Keratinocyte (primary cell): ENCODE measurements at regions of chr15 and their contacts with region 1.

Region 1: GRCh38 chr15:45200001-45200798 is 12.4 kb upstream of the SHF start:
- DNase-seq: peak; percentile 93
- H3K4me3 ChIP-seq: peak overlapping the region; percentile 69 to 90 (median 89)
- H3K27ac ChIP-seq: peak overlapping the region; percentile 87
- H3K4me1 ChIP-seq: peaks cover 8% of the 10 kb centered on the region
- H3K27me3 ChIP-seq: no peaks in the 10 kb centered on the region
- CTCF ChIP-seq: no peak

Region 2: GRCh38 chr15:45307230-45307924 is 107.2 kb after region 1 on chr15:
- dilution Hi-C with region 1: loop called (anchors 25 kb)
- DNase-seq: no peak
- H3K4me3 ChIP-seq: peak overlapping the region in 1 of 3 experiments; percentile 31
- H3K27ac ChIP-seq: no peak overlapping the region
- H3K4me1 ChIP-seq: peaks cover 2% of the 10 kb centered on the region
- H3K27me3 ChIP-seq: peaks cover 3% of the 10 kb centered on the region
- CTCF ChIP-seq: peak in 2 of 3 experiments; percentile 37 to 43

Region 3: DNA sequence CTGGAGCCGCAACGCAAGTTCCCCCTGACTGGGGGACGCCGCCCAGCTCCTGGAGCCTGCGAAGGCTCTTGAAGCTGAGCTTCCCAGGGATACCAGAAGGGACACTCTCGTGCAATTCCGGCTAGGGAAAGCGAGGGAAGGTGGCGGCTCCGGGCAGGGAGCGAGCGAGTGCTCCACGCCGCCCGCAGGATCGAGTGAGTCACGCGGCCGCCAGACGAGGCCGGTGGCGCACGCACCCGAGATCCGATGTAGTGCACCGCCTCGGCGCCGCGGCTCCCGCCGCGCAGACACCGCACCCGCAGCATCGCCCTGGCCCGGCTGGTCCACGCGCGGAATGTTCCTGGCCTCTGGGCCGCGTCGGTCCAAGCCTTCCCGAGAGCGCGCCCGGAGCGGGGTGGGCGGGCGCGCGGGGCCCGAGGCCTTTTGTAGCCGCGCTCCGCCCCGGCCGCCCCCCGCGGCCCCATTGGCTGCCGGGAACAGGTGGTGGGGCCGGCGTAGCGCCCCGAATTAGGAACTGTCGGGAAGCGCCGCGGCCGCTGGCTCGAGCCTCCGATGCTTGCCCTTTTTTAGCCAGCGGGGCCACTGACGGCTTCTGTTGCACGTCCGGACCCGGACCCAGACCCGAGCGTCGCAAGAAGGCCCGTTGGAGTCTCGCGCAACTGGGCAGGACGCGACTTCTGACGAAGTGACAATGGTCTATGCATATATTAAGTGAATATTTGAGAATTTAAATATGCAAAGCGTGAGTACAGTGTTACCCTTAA is 178.1 kb after region 1 on chr15 and contains the start of gene GATM:
- dilution Hi-C with region 1: loop called (anchors 25 kb)
- DNase-seq: no peak
- H3K4me3 ChIP-seq: peak within 1 kb of the TSS; percentile 37 to 70 (median 60)
- H3K27ac ChIP-seq: no peak within 1 kb of the TSS
- H3K4me1 ChIP-seq: peaks cover 9% of the 10 kb centered on the region
- H3K27me3 ChIP-seq: peaks cover 39% of the 10 kb centered on the region
- CTCF ChIP-seq: peak; percentile 43 to 63 (median 55)
- polyA plus RNA-seq, gene GATM: 0.53 to 1.2 TPM (median 0.60 TPM) in 3 replicates